ENCODE measurements at regions of chr15 and their contacts with region 1.

Region 1: DNA sequence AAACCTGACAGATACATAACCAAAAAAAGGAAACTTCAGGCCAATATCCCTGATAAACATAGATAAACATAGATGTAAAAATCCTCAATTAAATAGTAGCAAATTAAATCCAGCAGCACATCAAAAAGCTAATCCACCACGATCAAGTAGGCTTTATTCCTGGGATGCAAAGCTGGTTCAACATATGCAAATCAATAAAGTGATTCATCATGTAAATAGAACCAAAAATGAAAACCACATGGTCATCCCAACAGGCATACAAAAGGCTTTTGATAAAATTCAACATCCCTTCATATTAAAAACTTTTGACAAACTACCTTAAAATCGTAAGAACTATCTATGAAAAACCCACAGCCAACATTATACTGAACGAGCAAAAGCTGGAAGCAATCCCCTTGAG is 882.2 kb downstream of the NTRK3 start:
- DNase-seq: no peak
- H3K4me3 ChIP-seq: no peak overlapping the region
- H3K27ac ChIP-seq: no peak overlapping the region
- H3K27me3 ChIP-seq: no peaks in the 10 kb centered on the region
- CTCF ChIP-seq: no peak

Region 2: DNA sequence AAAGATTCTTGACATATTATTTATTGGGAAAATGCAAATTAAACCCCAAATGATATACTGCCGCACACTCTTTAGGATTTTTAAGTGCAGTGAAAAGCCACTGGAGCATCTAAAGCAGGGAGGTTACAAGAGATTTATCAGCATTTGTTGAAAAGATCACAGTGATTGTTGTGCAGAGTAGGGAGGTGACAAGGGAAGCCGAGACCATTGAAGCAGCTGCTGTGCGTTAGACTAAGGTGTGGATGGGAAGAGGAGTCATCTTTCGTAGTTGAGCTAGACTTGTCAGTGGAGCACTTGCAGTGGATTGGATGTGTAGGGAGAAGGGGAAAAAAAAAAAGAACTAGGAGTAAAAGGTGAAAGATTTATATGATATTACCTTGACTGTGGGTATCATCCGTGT is 27.6 kb after region 1 on chr15:
- CTCF ChIA-PET with region 1: interaction called, 10 read pairs
- POLR2A ChIA-PET with region 1: no interaction called
- DNase-seq: no peak
- H3K4me3 ChIP-seq: no peak overlapping the region
- H3K27ac ChIP-seq: no peak overlapping the region
- H3K27me3 ChIP-seq: no peaks in the 10 kb centered on the region
- CTCF ChIP-seq: no peak